ENCODE measurements at regions of chr1 and their contacts with region 1.

Region 1: GRCh38 chr1:28631713-28632112 is 11.2 kb downstream of the TAF12 start:
- DNase-seq: no peak
- H3K4me3 ChIP-seq: no peak overlapping the region
- H3K27ac ChIP-seq: no peak overlapping the region
- H3K4me1 ChIP-seq: no peaks in the 10 kb centered on the region
- H3K27me3 ChIP-seq: no peaks in the 10 kb centered on the region
- CTCF ChIP-seq: no peak

Region 2: DNA sequence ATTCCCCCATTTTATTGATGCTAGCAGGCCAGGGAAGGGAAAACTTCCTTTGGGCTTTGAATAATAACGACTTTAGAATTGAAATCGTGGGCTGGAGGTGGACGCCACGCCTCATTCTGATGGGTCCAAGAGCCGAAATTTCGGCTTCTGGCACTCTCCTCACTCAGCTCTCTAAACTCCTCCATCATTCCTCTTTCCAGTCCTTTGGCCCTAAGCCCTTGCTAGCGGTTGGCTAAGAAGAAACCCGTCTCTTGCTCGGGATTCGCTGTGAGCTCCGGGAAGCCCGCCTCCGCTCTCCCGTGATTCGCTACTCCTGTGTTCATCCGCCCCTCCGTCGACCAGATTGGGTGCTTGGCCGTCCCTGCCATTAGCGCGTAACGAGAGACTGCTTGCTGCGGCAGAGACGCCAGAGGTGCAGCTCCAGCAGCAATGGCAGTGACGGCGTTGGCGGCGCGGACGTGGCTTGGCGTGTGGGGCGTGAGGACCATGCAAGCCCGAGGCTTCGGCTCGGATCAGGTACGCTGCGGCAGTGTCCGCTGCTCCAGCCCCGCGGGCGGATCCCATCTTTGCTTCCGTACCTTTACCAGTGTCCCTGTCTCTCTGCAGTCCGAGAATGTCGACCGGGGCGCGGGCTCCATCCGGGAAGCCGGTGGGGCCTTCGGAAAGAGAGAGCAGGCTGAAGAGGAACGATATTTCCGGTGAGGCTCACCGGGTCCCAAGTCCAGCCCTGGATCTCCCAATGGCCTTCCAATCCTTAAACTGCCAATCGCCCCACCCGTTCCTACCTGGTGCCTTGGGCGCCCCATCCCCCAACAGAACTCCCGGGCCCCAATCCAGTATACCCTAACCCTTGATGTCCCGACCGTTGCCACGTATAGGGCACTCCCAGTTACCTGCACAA is 395.7 kb before region 1 on chr1 and contains the start of gene ATP5IF1:
- CTCF ChIA-PET with region 1: no interaction called
- POLR2A ChIA-PET with region 1: interaction called, 27 read pairs
- intact Hi-C with region 1: no loop called
- DNase-seq: peak; percentile 93 to 94
- H3K4me3 ChIP-seq: peak within 1 kb of the TSS; percentile 88
- H3K27ac ChIP-seq: no peak within 1 kb of the TSS
- H3K4me1 ChIP-seq: peaks cover 9% of the 10 kb centered on the region; the same call in 1 of the 2 replicates
- H3K27me3 ChIP-seq: no peaks in the 10 kb centered on the region
- CTCF ChIP-seq: no peak
- total RNA-seq, gene ATP5IF1: 125 and 146 TPM in 2 replicates

Region 3: GRCh38 chr1:28395181-28395580 is 236.5 kb before region 1 on chr1:
- CTCF ChIA-PET with region 1: interaction called, 13 read pairs
- POLR2A ChIA-PET with region 1: no interaction called
- intact Hi-C with region 1: no loop called
- DNase-seq: no peak
- H3K4me3 ChIP-seq: no peak overlapping the region
- H3K27ac ChIP-seq: peak overlapping the region; percentile 16; the same call in 1 of the 2 replicates
- H3K4me1 ChIP-seq: peaks cover 10% of the 10 kb centered on the region; the same call in 1 of the 2 replicates
- H3K27me3 ChIP-seq: no peaks in the 10 kb centered on the region
- CTCF ChIP-seq: no peak